G401 (cell line): ENCODE measurements at regions of chr15 and their contacts with region 1.

Region 1: GRCh38 chr15:90345857-90346256 is 6.2 kb upstream of the ZNF774 start:
- DNase-seq: no peak

Region 2: DNA sequence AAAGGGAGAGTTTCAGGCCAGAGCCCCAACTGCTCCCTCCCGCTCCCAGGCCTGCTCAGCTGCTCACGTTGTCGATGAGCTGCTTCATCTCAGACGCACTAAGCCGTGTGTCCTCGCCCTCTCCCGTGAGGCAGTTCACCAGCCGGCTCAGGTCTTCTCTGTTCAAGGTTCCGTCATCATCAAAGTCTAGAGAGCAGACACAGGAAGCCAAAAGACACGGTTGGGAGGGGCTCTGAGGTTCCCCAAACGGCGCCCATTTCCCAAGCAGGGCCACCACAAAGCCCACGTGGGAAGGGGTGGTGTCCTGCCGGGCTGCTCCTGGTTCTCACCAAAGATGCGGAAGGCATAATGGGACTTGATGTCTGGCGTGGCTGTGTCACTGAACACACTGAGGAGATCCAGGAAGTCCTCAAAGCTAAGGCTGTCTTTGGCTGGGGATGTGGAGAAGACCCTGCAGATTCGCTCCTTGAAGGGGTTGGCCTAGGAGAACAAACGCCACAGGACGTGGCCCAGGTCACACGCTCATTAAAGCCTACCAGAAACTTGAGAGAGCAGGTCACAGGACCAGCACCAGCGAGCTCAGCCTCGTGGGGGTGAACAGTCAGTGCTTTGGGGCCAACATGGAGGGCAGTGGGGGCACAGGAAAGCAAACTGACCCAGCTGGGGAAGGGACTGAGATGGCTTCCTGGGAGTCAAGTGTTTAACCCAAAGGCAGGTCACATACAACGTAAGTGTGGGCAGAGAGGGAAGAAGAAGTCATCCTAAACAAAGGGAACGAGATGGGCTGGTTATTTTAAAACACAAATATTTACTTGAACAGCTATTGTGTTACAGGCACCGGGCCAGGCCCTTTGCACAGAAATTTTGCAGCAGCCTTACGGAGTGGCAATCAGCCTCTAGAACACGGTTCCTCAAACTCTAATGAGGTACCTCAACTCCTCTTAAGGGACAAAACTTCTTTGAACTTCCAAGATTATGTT is 114.5 kb before region 1 on chr15:
- in situ Hi-C with region 1: no loop called
- DNase-seq: no peak

Region 3: GRCh38 chr15:90382305-90382704 is 36.4 kb after region 1 on chr15:
- in situ Hi-C with region 1: loop called (anchors 5 kb)
- DNase-seq: no peak